Activated T-helper 1 cell treated with anti-CD3 and anti-CD28 coated beads, Interleukin-12 subunit alpha, Interleukin-12 subunit beta, Interleukin-2, Interleukin-4 antibody, amounts not matched to agents 30 ng/mL and 10 ng/mL and 1 ng/mL, durations not matched to agents 14 hours and 24 hours and 36 hours (primary cell): ENCODE measurements at regions of chr2 and their contacts with region 1.

Region 1: GRCh38 chr2:10832203-10832936 is 19.8 kb upstream of the PDIA6 start:
- DNase-seq: peak; percentile 74
- H3K4me3 Mint-ChIP-seq: no peak overlapping the region
- H3K27ac Mint-ChIP-seq: no peak overlapping the region
- H3K4me1 Mint-ChIP-seq: peaks cover 6% of the 10 kb centered on the region
- H3K27me3 Mint-ChIP-seq: peaks cover 22% of the 10 kb centered on the region

Region 2: GRCh38 chr2:10909050-10909995 is 77.0 kb after region 1 on chr2:
- intact Hi-C with region 1: loop called (anchors 5 kb)
- DNase-seq: no peak
- H3K4me3 Mint-ChIP-seq: no peak overlapping the region
- H3K27ac Mint-ChIP-seq: no peak overlapping the region
- H3K4me1 Mint-ChIP-seq: no peaks in the 10 kb centered on the region
- H3K27me3 Mint-ChIP-seq: peaks cover 16% of the 10 kb centered on the region

Region 3: GRCh38 chr2:11344342-11344955 is 512.1 kb after region 1 on chr2 and contains the start of gene ROCK2:
- intact Hi-C with region 1: loop called (anchors 10 kb)
- DNase-seq: peak; percentile 62
- H3K4me3 Mint-ChIP-seq: peak within 1 kb of the TSS; percentile 99
- H3K27ac Mint-ChIP-seq: peak within 1 kb of the TSS; percentile 95
- H3K4me1 Mint-ChIP-seq: peaks cover 35% of the 10 kb centered on the region
- H3K27me3 Mint-ChIP-seq: peaks cover 14% of the 10 kb centered on the region
- total RNA-seq, gene ROCK2: 20.5 and 21.7 TPM in 2 replicates

Region 4: GRCh38 chr2:11465497-11466406 is 633.4 kb after region 1 on chr2 and contains the start of gene E2F6:
- intact Hi-C with region 1: loop called (anchors 5 kb)
- DNase-seq: peak; percentile 82
- H3K4me3 Mint-ChIP-seq: peak within 1 kb of the TSS; percentile 86
- H3K27ac Mint-ChIP-seq: peak within 1 kb of the TSS; percentile 92
- H3K4me1 Mint-ChIP-seq: peaks cover 34% of the 10 kb centered on the region
- H3K27me3 Mint-ChIP-seq: no peaks in the 10 kb centered on the region
- total RNA-seq, gene E2F6: 22.1 and 23.7 TPM in 2 replicates